ENCODE measurements at regions of chr14 and their contacts with region 1.

Region 1: GRCh38 chr14:60561845-60562746 is 53.1 kb downstream of the SIX6 start:
- DNase-seq: peak in 2 of 9 donors; percentile 2 to 5
- ATAC-seq: no peak
- H3K4me3 ChIP-seq: no peak overlapping the region
- H3K4me3 Mint-ChIP-seq: no peak overlapping the region
- H3K27ac ChIP-seq: no peak overlapping the region
- H3K27ac Mint-ChIP-seq: no peak overlapping the region
- H3K4me1 ChIP-seq: no peaks in the 10 kb centered on the region
- H3K4me1 Mint-ChIP-seq: no peaks in the 10 kb centered on the region
- H3K27me3 ChIP-seq: no peaks in the 10 kb centered on the region
- H3K27me3 Mint-ChIP-seq: peaks cover 0 to 14% (median 0%) of the 10 kb centered on the region in 5 donors

Region 2: GRCh38 chr14:59964251-59965007 is 597.7 kb before region 1 on chr14:
- CTCF ChIA-PET with region 1: interaction called, 3 read pairs
- POLR2A ChIA-PET with region 1: no interaction called
- intact Hi-C with region 1: loop called in 1 of 2 experiments (anchors 1 kb)
- DNase-seq: peak in 6 of 9 donors; percentile 6 to 38 (median 20)
- ATAC-seq: peak; percentile 44
- H3K4me3 ChIP-seq: no peak overlapping the region
- H3K4me3 Mint-ChIP-seq: peak overlapping the region; percentile 77 to 95 (median 88)
- H3K27ac ChIP-seq: no peak overlapping the region
- H3K27ac Mint-ChIP-seq: peak overlapping the region in 8 of 9 donors; percentile 40 to 99 (median 88)
- H3K4me1 ChIP-seq: no peaks in the 10 kb centered on the region
- H3K4me1 Mint-ChIP-seq: peaks cover 3 to 14% (median 10%) of the 10 kb centered on the region in 7 donors
- H3K27me3 ChIP-seq: no peaks in the 10 kb centered on the region
- H3K27me3 Mint-ChIP-seq: peaks cover 0 to 15% (median 5%) of the 10 kb centered on the region in 5 donors

Region 3: GRCh38 chr14:60064491-60065072 is 497.5 kb before region 1 on chr14:
- CTCF ChIA-PET with region 1: no interaction called
- POLR2A ChIA-PET with region 1: no interaction called
- intact Hi-C with region 1: loop called (anchors 2 to 5 kb)
- DNase-seq: peak in 4 of 9 donors; percentile 28 to 39 (median 36)
- ATAC-seq: peak; percentile 70
- H3K4me3 ChIP-seq: no peak overlapping the region
- H3K4me3 Mint-ChIP-seq: no peak overlapping the region
- H3K27ac ChIP-seq: no peak overlapping the region
- H3K27ac Mint-ChIP-seq: no peak overlapping the region
- H3K4me1 ChIP-seq: no peaks in the 10 kb centered on the region
- H3K4me1 Mint-ChIP-seq: no peaks in the 10 kb centered on the region
- H3K27me3 ChIP-seq: no peaks in the 10 kb centered on the region
- H3K27me3 Mint-ChIP-seq: peaks cover 0 to 7% (median 4%) of the 10 kb centered on the region in 5 donors

Region 4: GRCh38 chr14:60266021-60266937 is 295.8 kb before region 1 on chr14:
- CTCF ChIA-PET with region 1: no interaction called
- POLR2A ChIA-PET with region 1: no interaction called
- intact Hi-C with region 1: loop called in 1 of 2 experiments (anchors 1 kb)
- DNase-seq: peak in 4 of 9 donors; percentile 12 to 22 (median 16)
- ATAC-seq: peak; percentile 70
- H3K4me3 ChIP-seq: no peak overlapping the region
- H3K4me3 Mint-ChIP-seq: no peak overlapping the region
- H3K27ac ChIP-seq: no peak overlapping the region
- H3K27ac Mint-ChIP-seq: no peak overlapping the region
- H3K4me1 ChIP-seq: peaks cover under 1 to 3% of the 10 kb centered on the region in 2 donors
- H3K4me1 Mint-ChIP-seq: peaks cover 10 to 68% (median 53%) of the 10 kb centered on the region in 7 donors
- H3K27me3 ChIP-seq: no peaks in the 10 kb centered on the region
- H3K27me3 Mint-ChIP-seq: no peaks in the 10 kb centered on the region

Region 5: DNA sequence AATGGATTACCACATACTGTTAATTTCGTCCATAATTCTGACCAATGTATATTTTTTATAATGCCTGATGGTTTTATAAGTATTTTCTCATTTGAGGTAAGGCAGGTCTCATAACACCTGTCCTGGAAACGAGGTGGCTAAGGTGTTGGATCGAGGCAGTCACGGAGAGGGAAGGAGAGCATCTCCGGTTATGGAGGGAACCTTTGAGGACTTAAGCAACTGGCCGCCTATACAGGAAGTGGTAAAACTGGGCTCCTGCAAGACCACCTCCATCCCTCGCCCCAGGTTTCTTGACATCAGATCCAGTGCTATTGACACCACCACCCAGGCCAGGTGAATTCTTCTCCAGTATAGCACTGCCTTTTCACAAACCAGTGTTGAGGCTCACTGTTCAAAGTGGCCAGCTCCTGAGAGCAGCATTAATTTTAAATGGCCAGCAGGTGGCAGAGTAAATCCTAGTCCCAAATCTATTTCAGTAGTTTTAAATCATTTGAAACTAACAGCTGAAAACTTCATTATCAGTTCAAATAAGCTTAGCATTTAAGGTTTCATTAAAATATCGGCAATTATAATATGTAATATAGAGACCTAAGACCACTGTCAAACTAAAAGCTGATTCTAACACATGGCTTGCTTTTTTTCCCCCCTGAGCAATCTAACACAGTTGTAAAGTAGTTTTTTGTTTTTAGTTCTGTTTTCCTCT is 212.3 kb before region 1 on chr14:
- CTCF ChIA-PET with region 1: interaction called, 3 read pairs
- POLR2A ChIA-PET with region 1: no interaction called
- intact Hi-C with region 1: loop called in 1 of 2 experiments (anchors 1 kb)
- DNase-seq: peak in 6 of 9 donors; percentile 2 to 37 (median 24)
- ATAC-seq: peak; percentile 54
- H3K4me3 ChIP-seq: no peak overlapping the region
- H3K4me3 Mint-ChIP-seq: no peak overlapping the region
- H3K27ac ChIP-seq: no peak overlapping the region
- H3K27ac Mint-ChIP-seq: no peak overlapping the region
- H3K4me1 ChIP-seq: no peaks in the 10 kb centered on the region
- H3K4me1 Mint-ChIP-seq: peaks cover 0 to 12% (median 3%) of the 10 kb centered on the region in 7 donors
- H3K27me3 ChIP-seq: peaks cover 0 to 3% of the 10 kb centered on the region in 2 donors
- H3K27me3 Mint-ChIP-seq: peaks cover 0 to 27% (median 12%) of the 10 kb centered on the region in 5 donors

Region 6: GRCh38 chr14:60616461-60616959 is 54.4 kb after region 1 on chr14:
- CTCF ChIA-PET with region 1: no interaction called
- POLR2A ChIA-PET with region 1: no interaction called
- intact Hi-C with region 1: no loop called
- DNase-seq: no peak
- ATAC-seq: no peak
- H3K4me3 ChIP-seq: no peak overlapping the region
- H3K4me3 Mint-ChIP-seq: no peak overlapping the region
- H3K27ac ChIP-seq: no peak overlapping the region
- H3K27ac Mint-ChIP-seq: no peak overlapping the region
- H3K4me1 ChIP-seq: no peaks in the 10 kb centered on the region
- H3K4me1 Mint-ChIP-seq: peaks cover 0 to 8% (median 0%) of the 10 kb centered on the region in 7 donors
- H3K27me3 ChIP-seq: peaks cover 0 to 2% of the 10 kb centered on the region in 2 donors
- H3K27me3 Mint-ChIP-seq: peaks cover 8 to 26% (median 21%) of the 10 kb centered on the region in 5 donors

Region 7: DNA sequence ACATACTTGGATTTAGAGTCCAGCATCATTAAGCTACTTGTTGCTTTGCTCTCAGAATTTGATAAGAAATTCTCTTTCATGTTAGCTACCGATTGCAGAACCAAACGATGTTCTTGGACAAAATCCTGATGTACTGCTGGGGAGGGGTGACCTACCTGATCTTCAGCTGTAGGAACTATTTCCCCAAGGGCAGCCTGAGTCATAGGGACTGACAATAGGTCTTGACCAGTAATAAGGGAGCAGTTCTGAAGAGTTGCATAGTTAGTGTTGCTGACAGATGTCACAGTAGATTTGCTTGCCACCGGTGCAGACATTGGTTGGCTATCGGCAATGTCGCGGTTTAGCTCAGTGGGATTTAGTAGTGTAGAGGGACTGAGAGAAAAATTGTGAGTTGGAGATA is 151.4 kb after region 1 on chr14:
- CTCF ChIA-PET with region 1: no interaction called
- POLR2A ChIA-PET with region 1: no interaction called
- intact Hi-C with region 1: no loop called
- DNase-seq: no peak
- ATAC-seq: no peak
- H3K4me3 ChIP-seq: no peak overlapping the region
- H3K4me3 Mint-ChIP-seq: no peak overlapping the region
- H3K27ac ChIP-seq: no peak overlapping the region
- H3K27ac Mint-ChIP-seq: no peak overlapping the region
- H3K4me1 ChIP-seq: no peaks in the 10 kb centered on the region
- H3K4me1 Mint-ChIP-seq: no peaks in the 10 kb centered on the region
- H3K27me3 ChIP-seq: peaks cover 0 to 3% of the 10 kb centered on the region in 2 donors
- H3K27me3 Mint-ChIP-seq: peaks cover 27 to 51% (median 38%) of the 10 kb centered on the region in 5 donors

Region 8: DNA sequence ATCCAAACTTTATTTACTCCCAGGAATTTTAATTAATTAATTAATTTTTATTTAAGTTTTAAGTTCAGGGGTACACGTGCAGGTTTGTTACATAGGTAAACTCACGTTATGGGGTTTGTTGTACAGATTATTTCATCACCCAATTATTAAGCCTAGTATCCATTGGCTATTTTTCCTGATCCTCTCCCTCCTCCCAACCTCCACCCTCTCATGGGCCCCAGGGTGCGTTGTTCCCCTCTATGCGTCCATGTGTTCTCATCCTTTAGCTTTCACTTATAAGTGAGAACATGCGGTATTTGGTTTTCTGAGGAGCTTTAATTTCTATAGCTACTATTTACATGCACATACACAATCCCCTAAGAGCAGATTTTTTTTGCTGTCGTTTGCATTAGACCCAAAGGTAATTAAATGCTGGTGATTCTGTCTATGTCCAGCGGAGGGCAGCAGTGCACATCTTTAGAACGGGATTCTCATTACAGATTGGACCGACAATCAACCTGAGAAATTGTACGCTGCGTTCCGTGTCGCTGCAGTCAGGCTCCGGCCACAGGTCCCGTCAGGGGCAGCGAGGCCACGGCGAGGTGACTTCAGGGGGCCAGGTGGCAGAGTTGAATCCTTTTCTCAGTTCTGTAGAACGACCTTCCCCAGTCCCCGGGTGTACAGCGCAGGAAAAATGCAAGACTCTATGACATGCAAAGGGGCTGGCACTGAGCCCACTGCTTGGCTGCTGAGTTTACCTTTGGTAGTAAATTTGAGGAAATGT is 707.4 kb after region 1 on chr14:
- CTCF ChIA-PET with region 1: no interaction called
- POLR2A ChIA-PET with region 1: no interaction called
- intact Hi-C with region 1: no loop called
- DNase-seq: peak; percentile 47 to 78 (median 71)
- ATAC-seq: peak; percentile 96
- H3K4me3 ChIP-seq: peak overlapping the region; percentile 58
- H3K4me3 Mint-ChIP-seq: peak overlapping the region; percentile 60 to 84 (median 77)
- H3K27ac ChIP-seq: no peak overlapping the region
- H3K27ac Mint-ChIP-seq: no peak overlapping the region
- H3K4me1 ChIP-seq: peaks cover 3% of the 10 kb centered on the region in 2 donors
- H3K4me1 Mint-ChIP-seq: peaks cover 0 to 8% (median 4%) of the 10 kb centered on the region in 7 donors
- H3K27me3 ChIP-seq: no peaks in the 10 kb centered on the region
- H3K27me3 Mint-ChIP-seq: peaks cover 27 to 65% (median 46%) of the 10 kb centered on the region in 5 donors

Region 9: GRCh38 chr14:61950340-61950739 is 1388.2 kb after region 1 on chr14:
- CTCF ChIA-PET with region 1: no interaction called
- POLR2A ChIA-PET with region 1: no interaction called
- intact Hi-C with region 1: no loop called
- DNase-seq: no peak
- ATAC-seq: no peak
- H3K4me3 ChIP-seq: no peak overlapping the region
- H3K4me3 Mint-ChIP-seq: no peak overlapping the region
- H3K27ac ChIP-seq: no peak overlapping the region
- H3K27ac Mint-ChIP-seq: no peak overlapping the region
- H3K4me1 ChIP-seq: no peaks in the 10 kb centered on the region
- H3K4me1 Mint-ChIP-seq: no peaks in the 10 kb centered on the region
- H3K27me3 ChIP-seq: no peaks in the 10 kb centered on the region
- H3K27me3 Mint-ChIP-seq: peaks cover 0 to 25% (median 11%) of the 10 kb centered on the region in 5 donors

Measured in naive thymus-derived CD4-positive, alpha-beta T cell (primary cell).